A673 (cell line): ENCODE measurements at regions of chr2 and their contacts with region 1.

Region 1: GRCh38 chr2:71157124-71157793 is 26.8 kb downstream of the MPHOSPH10 start:
- DNase-seq: peak; percentile 69
- H3K4me3 ChIP-seq: peak overlapping the region; percentile 17
- H3K27ac ChIP-seq: no peak overlapping the region
- H3K4me1 ChIP-seq: peaks cover 6% of the 10 kb centered on the region
- H3K27me3 ChIP-seq: no peaks in the 10 kb centered on the region
- CTCF ChIP-seq: peak; percentile 79

Region 2: DNA sequence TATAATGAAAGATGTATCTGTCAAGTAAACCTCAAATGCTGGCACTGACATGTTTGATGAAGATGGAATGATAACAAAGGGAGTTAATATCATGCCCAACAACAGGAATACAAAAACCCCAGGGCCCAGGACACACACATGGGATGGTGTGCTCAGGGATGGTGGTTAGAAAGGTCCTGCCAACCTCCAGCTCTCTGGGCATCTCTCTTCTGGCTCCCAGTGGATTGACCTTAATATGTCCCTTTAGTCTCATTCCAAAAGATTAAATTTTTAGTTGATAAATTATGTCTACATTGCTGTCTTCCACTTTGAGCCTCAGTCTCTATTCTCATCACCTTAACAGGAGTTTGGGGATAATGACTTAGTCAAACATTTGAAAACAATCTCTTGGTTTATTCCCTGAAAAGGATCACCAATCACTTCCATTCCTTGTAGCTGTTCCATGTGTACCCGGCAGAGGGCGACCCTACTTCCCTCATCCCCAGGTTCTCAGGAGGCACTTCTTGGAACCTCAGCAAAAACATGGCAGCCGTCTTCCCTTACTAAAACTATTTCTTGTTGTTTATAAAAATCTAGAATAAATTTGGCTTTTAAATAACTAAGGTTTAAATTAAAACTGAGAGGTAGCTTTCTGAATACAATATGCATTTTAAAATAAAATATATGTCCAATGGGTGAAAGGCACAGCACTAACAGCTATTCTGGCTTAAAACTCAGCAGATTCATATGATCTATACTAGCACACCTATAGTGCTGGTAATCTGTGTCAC is 56.9 kb before region 1 on chr2:
- CTCF ChIA-PET with region 1: interaction called, 11 read pairs
- POLR2A ChIA-PET with region 1: no interaction called
- intact Hi-C with region 1: no loop called
- DNase-seq: peak; percentile 70
- H3K4me3 ChIP-seq: no peak overlapping the region
- H3K27ac ChIP-seq: no peak overlapping the region
- H3K4me1 ChIP-seq: no peaks in the 10 kb centered on the region
- H3K27me3 ChIP-seq: no peaks in the 10 kb centered on the region
- CTCF ChIP-seq: peak; percentile 80

Region 3: DNA sequence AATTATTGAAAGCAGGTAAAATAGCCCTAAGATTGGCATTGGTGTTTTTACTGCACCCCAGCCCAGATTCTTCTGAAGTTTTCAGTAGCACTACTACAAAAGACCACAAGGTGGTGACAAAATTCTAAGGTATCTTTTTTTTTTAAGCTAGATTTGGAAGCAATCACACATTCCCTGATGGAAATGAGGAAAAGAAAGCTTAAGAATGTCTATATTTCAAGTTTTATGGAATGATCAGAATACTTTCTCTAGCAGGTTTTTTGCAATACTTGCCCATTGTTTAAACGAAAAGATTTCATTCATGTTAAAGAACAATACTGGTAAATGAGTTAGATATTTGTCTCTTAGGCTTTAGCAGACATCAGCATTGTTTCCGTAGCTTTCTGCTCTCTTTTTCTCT is 142.2 kb after region 1 on chr2:
- CTCF ChIA-PET with region 1: interaction called, 4 read pairs
- POLR2A ChIA-PET with region 1: no interaction called
- intact Hi-C with region 1: loop called (anchors 10 kb)
- DNase-seq: peak; percentile 48
- H3K4me3 ChIP-seq: no peak overlapping the region
- H3K27ac ChIP-seq: no peak overlapping the region
- H3K4me1 ChIP-seq: no peaks in the 10 kb centered on the region
- H3K27me3 ChIP-seq: no peaks in the 10 kb centered on the region
- CTCF ChIP-seq: peak; percentile 73

Region 4: GRCh38 chr2:71510196-71510807 is 353.0 kb after region 1 on chr2:
- CTCF ChIA-PET with region 1: no interaction called
- POLR2A ChIA-PET with region 1: no interaction called
- intact Hi-C with region 1: loop called (anchors 1 kb)
- DNase-seq: peak; percentile 63
- H3K4me3 ChIP-seq: no peak overlapping the region
- H3K27ac ChIP-seq: no peak overlapping the region
- H3K4me1 ChIP-seq: no peaks in the 10 kb centered on the region
- H3K27me3 ChIP-seq: peaks cover 7% of the 10 kb centered on the region
- CTCF ChIP-seq: peak; percentile 86